PC-3 (cell line): ENCODE measurements at regions of chr15 and their contacts with region 1.

Region 1: DNA sequence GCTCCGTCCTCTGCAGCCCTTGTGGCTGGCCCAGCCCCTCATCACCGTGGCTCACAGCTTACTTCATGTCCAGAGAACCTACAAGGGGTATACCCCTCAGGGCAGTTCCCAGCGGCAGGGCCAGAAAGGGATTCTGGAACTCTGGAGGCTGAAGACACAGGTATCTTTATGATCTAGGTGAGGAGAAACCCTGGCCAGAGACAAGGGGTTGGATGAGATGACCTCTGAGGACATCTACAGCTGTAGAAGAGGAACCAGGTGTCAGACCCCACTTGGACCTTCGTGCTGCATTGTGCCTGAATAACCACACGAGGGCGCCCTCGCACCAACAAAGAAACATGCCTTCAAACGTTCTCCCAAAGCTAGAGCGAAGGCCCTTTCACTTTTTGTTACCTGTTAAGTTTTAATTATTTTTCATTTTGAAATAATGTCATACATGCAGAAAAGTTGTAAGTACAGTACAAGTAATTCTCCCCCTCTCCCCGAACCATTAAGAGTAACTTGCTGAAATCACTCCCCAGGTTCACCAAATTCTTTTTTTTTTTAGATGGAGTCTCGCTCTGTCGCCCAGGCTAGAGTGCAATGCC is 118.7 kb upstream of the SMAD3 start:
- DNase-seq: peak; percentile 79
- ATAC-seq: peak; percentile 59
- H3K4me3 ChIP-seq: peak overlapping the region; percentile 26; the same call in 1 of the 2 replicates
- H3K27ac ChIP-seq: no peak overlapping the region
- H3K4me1 ChIP-seq: peaks cover 26% of the 10 kb centered on the region
- H3K27me3 ChIP-seq: no peaks in the 10 kb centered on the region
- CTCF ChIP-seq: peak; percentile 82

Region 2: GRCh38 chr15:66851226-66852071 is 95.2 kb before region 1 on chr15:
- CTCF ChIA-PET with region 1: no interaction called
- POLR2A ChIA-PET with region 1: no interaction called
- intact Hi-C with region 1: no loop called
- DNase-seq: peak; percentile 72
- ATAC-seq: peak; percentile 93
- H3K4me3 ChIP-seq: no peak overlapping the region
- H3K27ac ChIP-seq: no peak overlapping the region
- H3K4me1 ChIP-seq: peaks cover 16% of the 10 kb centered on the region
- H3K27me3 ChIP-seq: no peaks in the 10 kb centered on the region
- CTCF ChIP-seq: peak; percentile 78

Region 3: DNA sequence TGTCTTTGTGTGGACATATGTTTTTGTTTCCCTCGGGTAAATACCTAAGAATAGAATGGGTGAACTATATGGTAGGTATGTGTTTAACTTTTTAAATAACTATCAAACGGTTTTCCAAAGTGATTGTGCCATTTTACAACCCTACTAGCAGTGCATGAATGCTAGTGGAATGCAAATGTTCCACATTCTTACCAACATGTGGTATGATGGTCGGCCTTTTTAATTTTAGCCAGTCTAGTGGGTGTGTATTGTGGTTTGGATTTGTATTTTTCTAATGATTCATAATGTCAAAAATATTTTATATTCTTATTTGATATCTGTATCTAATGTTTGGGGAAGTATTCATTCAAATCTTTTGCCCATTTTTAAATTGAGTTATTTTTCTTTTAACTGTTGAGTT is 50.5 kb after region 1 on chr15:
- CTCF ChIA-PET with region 1: no interaction called
- POLR2A ChIA-PET with region 1: no interaction called
- intact Hi-C with region 1: no loop called
- DNase-seq: peak; percentile 88
- ATAC-seq: peak; percentile 98
- H3K4me3 ChIP-seq: no peak overlapping the region
- H3K27ac ChIP-seq: no peak overlapping the region
- H3K4me1 ChIP-seq: peaks cover 37% of the 10 kb centered on the region
- H3K27me3 ChIP-seq: no peaks in the 10 kb centered on the region
- CTCF ChIP-seq: no peak

Region 4: DNA sequence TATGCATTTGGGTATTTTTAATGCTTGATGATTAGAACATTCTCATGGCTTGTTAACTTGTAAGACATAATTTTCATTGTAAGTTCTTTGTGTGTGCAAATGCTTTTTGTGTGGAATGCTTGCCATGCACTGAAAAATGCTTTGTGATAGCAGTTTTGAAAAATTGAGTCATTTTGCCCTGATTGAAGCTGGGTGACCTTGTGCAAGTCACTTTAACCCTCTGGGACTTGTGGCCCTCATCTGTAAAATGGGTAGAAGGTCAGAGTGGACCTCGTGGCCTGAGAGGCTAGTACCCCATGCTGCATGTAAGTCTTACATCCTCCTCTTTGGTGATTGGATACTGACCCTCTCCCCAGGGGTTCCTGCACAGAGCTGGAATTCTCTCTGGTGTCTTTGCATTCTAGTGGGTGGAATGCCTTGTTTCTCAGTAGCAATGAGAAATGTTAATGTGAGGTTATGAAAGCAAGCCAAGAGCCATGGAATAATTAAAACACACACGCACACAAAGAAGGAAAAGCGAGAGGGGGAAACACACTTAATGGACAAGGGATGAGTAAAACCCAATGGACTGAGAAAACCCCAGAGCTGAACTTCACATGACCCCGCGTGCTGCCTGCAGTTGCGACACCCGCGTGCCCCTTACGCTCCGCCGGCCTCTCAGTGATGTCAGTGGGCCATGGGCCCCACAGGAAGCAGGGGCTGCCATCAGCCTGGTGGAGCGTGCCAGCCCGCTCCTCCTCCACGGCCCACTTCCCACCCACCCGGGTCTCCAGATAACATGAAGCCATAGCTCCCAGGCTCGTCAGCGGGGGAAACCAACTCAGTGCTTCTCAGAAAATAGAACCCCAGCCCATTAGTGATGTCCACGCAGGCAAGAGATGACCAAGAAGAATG is 162.7 kb after region 1 on chr15:
- CTCF ChIA-PET with region 1: interaction called, 5 read pairs
- POLR2A ChIA-PET with region 1: no interaction called
- intact Hi-C with region 1: loop called (anchors 1 kb)
- DNase-seq: no peak
- ATAC-seq: no peak
- H3K4me3 ChIP-seq: no peak overlapping the region
- H3K27ac ChIP-seq: peak overlapping the region; percentile 99
- H3K4me1 ChIP-seq: peaks cover 57% of the 10 kb centered on the region
- H3K27me3 ChIP-seq: no peaks in the 10 kb centered on the region
- CTCF ChIP-seq: no peak

Region 5: GRCh38 chr15:67240235-67241131 is 293.8 kb after region 1 on chr15:
- CTCF ChIA-PET with region 1: interaction called, 4 read pairs
- POLR2A ChIA-PET with region 1: no interaction called
- intact Hi-C with region 1: loop called (anchors 5 kb)
- DNase-seq: peak; percentile 40
- ATAC-seq: peak; percentile 73
- H3K4me3 ChIP-seq: no peak overlapping the region
- H3K27ac ChIP-seq: no peak overlapping the region
- H3K4me1 ChIP-seq: peaks cover 21% of the 10 kb centered on the region; the same call in 1 of the 2 replicates
- H3K27me3 ChIP-seq: no peaks in the 10 kb centered on the region
- CTCF ChIP-seq: peak; percentile 72

Region 6: GRCh38 chr15:67303490-67304363 is 357.1 kb after region 1 on chr15:
- CTCF ChIA-PET with region 1: no interaction called
- POLR2A ChIA-PET with region 1: no interaction called
- intact Hi-C with region 1: loop called (anchors 1 kb)
- DNase-seq: peak; percentile 58
- ATAC-seq: peak; percentile 58; the same call in 1 of the 2 replicates
- H3K4me3 ChIP-seq: no peak overlapping the region
- H3K27ac ChIP-seq: no peak overlapping the region
- H3K4me1 ChIP-seq: no peaks in the 10 kb centered on the region
- H3K27me3 ChIP-seq: no peaks in the 10 kb centered on the region
- CTCF ChIP-seq: peak; percentile 75